ENCODE measurements at regions of chr15 and their contacts with region 1.

Region 1: DNA sequence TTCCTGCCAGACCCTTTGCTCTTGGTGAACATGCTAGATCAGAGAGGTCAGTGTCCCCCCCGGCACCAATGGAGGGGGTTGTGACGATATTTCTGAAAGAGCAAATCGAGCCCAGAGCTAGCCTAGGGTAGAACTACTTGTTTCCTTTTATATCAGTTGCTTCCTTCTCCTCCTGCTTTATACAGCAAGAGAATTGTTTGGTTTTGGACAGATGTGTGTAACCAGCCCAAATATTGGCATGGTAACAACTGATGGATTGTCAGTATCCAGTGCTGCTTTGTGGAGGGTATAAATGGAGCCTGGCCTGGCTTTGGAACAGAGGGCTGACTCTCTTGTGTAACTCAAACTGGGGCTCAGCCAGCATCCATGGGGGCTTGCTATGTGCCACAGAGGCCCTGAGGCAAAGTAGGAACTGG is 27.2 kb downstream of the SNX1 start:
- DNase-seq: no peak
- ATAC-seq: no peak
- H3K4me3 ChIP-seq: no peak overlapping the region
- H3K4me3 Mint-ChIP-seq: no peak overlapping the region
- H3K27ac ChIP-seq: no peak overlapping the region
- H3K27ac Mint-ChIP-seq: no peak overlapping the region
- H3K4me1 ChIP-seq: no peaks in the 10 kb centered on the region
- H3K4me1 Mint-ChIP-seq: peaks cover 0 to 2% (median 0%) of the 10 kb centered on the region in 3 donors
- H3K27me3 ChIP-seq: no peaks in the 10 kb centered on the region
- H3K27me3 Mint-ChIP-seq: no peaks in the 10 kb centered on the region

Region 2: DNA sequence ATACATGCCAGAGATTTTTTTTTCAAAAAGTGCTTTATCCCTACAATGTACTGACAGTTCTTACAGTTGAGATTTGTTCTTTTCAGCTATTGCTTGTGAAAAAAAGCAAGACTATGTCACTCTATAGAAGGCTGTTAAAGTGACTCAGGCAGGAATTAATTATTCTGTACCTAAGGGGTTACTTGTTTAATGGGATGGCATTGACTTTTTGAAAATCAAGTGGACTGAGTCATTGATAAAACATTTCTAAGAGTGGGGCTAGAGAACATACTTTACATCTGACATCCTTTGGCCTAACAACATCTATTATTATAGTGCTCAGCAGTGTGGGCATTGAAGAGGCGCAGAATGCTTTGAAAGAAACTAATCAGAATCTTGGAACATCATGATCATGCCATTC is 1453.7 kb after region 1 on chr15:
- CTCF ChIA-PET with region 1: interaction called in 1 of 2 experiments, 11 read pairs
- POLR2A ChIA-PET with region 1: no interaction called
- DNase-seq: no peak
- ATAC-seq: no peak
- H3K4me3 ChIP-seq: no peak overlapping the region
- H3K4me3 Mint-ChIP-seq: no peak overlapping the region
- H3K27ac ChIP-seq: no peak overlapping the region
- H3K27ac Mint-ChIP-seq: peak overlapping the region in 1 of 2 donors; percentile 17
- H3K4me1 ChIP-seq: no peaks in the 10 kb centered on the region
- H3K4me1 Mint-ChIP-seq: no peaks in the 10 kb centered on the region
- H3K27me3 ChIP-seq: no peaks in the 10 kb centered on the region
- H3K27me3 Mint-ChIP-seq: no peaks in the 10 kb centered on the region